ENCODE measurements at regions of chr3 and their contacts with region 1.

Region 1: DNA sequence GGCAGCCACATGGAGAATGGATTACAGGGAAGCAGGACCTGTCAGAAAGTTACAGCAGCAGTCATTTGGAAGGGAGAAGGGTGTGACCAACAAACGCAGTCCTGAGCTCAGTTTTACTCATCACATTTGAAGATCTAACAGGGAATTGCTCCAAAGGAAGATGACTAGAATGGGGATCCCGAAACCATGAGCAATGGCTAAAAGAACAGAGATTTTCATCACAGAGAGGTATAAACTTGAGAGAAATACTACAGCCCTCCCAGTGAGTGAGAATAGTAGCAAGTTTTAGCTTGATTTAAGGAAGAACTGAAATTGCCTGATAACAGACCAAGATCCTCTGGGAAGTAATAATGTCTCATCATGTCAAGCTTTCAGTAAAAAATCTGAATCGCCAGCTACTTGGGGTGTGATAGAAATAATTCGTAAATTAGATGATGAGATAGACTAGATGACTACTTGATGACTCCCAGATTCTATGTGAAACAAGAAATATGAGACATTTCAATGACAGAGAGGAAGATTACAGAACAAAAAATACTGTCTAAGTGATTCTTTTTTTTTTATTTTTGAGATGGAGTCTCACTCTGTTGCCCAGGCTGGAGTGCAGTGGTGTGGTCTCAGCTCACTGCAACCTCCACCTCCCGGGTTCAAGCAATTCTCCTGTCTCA is 16.9 kb downstream of the CD47 start:
- DNase-seq: no peak
- H3K4me3 Mint-ChIP-seq: no peak overlapping the region
- H3K27ac Mint-ChIP-seq: peak overlapping the region; percentile 31
- H3K4me1 Mint-ChIP-seq: peaks cover 71% of the 10 kb centered on the region
- H3K27me3 Mint-ChIP-seq: no peaks in the 10 kb centered on the region

Region 2: GRCh38 chr3:108062051-108062450 is 11.8 kb before region 1 on chr3:
- intact Hi-C with region 1: loop called (anchors 2 kb)
- DNase-seq: no peak
- H3K4me3 Mint-ChIP-seq: no peak overlapping the region
- H3K27ac Mint-ChIP-seq: no peak overlapping the region
- H3K4me1 Mint-ChIP-seq: peaks cover 46% of the 10 kb centered on the region
- H3K27me3 Mint-ChIP-seq: no peaks in the 10 kb centered on the region

Region 3: GRCh38 chr3:108164391-108164790 is 90.5 kb after region 1 on chr3:
- intact Hi-C with region 1: no loop called
- DNase-seq: no peak
- H3K4me3 Mint-ChIP-seq: no peak overlapping the region
- H3K27ac Mint-ChIP-seq: no peak overlapping the region
- H3K4me1 Mint-ChIP-seq: no peaks in the 10 kb centered on the region
- H3K27me3 Mint-ChIP-seq: no peaks in the 10 kb centered on the region

Measured in activated T-helper 1 cell treated with anti-CD3 and anti-CD28 coated beads, Interleukin-12 subunit alpha, Interleukin-12 subunit beta, Interleukin-2, Interleukin-4 antibody, amounts not matched to agents 30 ng/mL and 10 ng/mL and 1 ng/mL, durations not matched to agents 14 hours and 24 hours and 36 hours (primary cell).